Dorsolateral prefrontal cortex (tissue), 120 donors: ENCODE measurements at regions of chr5 and their contacts with region 1.

Region 1: DNA sequence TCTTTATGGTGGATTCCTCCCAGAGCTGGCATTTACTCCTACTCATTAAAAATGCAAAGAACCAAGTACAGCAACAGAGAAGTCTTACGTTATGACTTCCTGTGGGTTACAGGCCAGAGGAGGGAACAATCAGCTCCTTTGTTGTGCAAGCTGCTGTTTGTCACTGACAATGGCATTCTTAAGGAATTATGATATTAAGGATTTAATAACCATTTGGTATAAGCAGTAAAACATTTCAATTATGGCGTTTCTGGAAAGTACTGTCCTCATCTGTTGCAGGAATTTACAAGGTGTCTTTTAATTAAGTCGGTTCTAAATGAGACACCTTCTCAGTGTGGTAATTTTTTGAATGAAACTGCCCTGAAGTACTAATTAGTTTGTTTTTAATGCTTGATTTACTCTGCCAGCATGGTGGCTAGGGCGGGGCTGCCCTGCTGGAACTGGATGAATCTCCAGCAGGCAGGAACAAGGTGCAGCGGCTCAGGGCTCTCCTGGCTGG is 49.1 kb upstream of the VDAC1 start:
- DNase-seq: no peak
- H3K4me3 ChIP-seq: peak overlapping the region in 1 of 59 donors; percentile 19
- H3K27ac ChIP-seq: no peak overlapping the region
- H3K27me3 ChIP-seq: no peaks in the 10 kb centered on the region
- CTCF ChIP-seq: no peak

Region 2: DNA sequence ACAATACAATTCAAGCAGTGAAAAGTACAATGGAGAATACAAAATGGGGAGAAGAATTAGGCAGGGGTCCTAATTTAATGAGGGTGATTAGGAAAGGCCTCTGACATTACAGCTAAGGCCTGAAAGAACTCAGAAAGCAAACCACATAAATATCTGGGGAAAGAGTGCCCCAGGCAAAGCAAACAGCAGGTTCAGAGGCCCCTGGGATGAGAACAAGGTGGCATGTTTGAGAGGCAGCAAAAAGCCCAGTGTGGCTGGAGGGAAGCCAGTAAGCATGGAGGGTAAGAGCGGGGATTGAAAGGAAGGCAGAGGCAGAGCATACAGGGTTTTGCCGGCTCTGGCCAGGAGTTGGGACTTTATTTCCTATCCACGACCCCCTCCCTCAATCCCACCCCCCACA is 15.8 kb before region 1 on chr5:
- intact Hi-C with region 1: no loop called
- DNase-seq: no peak
- H3K4me3 ChIP-seq: no peak overlapping the region
- H3K27ac ChIP-seq: no peak overlapping the region
- H3K27me3 ChIP-seq: no peaks in the 10 kb centered on the region
- CTCF ChIP-seq: no peak

Region 3: DNA sequence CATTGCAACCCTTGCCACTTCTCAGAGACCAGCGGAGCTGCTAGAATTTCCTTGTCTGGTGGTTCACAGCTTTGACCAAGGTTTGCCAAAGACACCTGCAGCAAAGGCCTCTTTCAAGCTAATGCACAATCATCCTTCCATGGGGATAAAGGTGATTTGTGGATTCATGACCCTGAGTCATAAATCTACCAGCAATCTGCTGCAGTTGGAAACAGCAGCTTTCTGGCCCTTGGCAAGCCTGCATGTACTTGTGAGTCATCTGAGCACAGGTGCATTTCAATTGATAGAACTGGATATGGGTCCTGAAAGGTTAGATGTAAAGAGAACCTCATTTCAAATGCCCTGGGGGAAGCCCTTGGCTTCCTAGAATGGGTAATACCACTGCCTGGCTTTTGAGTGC is 39.0 kb after region 1 on chr5:
- intact Hi-C with region 1: loop called in 1 of 2 experiments (anchors 5 kb)
- DNase-seq: no peak
- H3K4me3 ChIP-seq: no peak overlapping the region
- H3K27ac ChIP-seq: no peak overlapping the region
- H3K27me3 ChIP-seq: no peaks in the 10 kb centered on the region
- CTCF ChIP-seq: no peak